CD8-positive, alpha-beta T cell (primary cell): ENCODE measurements at regions of chr21 and their contacts with region 1.

Region 1: DNA sequence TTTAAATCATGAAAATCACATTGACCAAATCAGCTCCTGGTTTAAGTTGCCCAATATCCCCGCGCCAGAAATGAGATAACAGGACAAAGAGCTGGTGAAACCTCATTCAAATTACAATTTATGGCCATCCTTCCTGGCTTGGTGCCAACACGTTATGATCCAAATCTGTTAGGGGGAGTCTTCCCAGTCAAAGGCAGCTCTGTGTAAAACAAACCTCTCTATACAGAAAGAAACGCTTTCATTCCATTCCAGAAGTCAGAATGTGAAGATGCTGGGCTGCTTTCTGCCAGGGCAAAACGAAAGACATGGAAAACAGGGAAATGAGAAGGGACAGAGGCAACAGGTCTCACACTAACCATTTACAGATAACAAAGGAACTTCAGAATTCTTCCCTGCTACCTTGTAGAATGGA is 53.5 kb upstream of the TIAM1 start:
- DNase-seq: no peak
- ATAC-seq: no peak
- H3K4me3 ChIP-seq: peak overlapping the region in 1 of 2 experiments; percentile 14
- H3K4me3 Mint-ChIP-seq: no peak overlapping the region
- H3K27ac ChIP-seq: no peak overlapping the region
- H3K27ac Mint-ChIP-seq: peak overlapping the region; percentile 84
- H3K4me1 ChIP-seq: peaks cover 47% of the 10 kb centered on the region
- H3K4me1 Mint-ChIP-seq: peaks cover 58% of the 10 kb centered on the region
- H3K27me3 ChIP-seq: peaks cover 0 to 2% of the 10 kb centered on the region in 2 experiments
- H3K27me3 Mint-ChIP-seq: no peaks in the 10 kb centered on the region
- CTCF ChIP-seq: no peak

Region 2: GRCh38 chr21:31282095-31282709 is 115.3 kb before region 1 on chr21:
- CTCF ChIA-PET with region 1: no interaction called
- POLR2A ChIA-PET with region 1: no interaction called
- intact Hi-C with region 1: no loop called
- DNase-seq: no peak
- ATAC-seq: no peak
- H3K4me3 ChIP-seq: no peak overlapping the region
- H3K4me3 Mint-ChIP-seq: no peak overlapping the region
- H3K27ac ChIP-seq: no peak overlapping the region
- H3K27ac Mint-ChIP-seq: peak overlapping the region; percentile 70
- H3K4me1 ChIP-seq: peaks cover 17% of the 10 kb centered on the region
- H3K4me1 Mint-ChIP-seq: peaks cover 31% of the 10 kb centered on the region
- H3K27me3 ChIP-seq: no peaks in the 10 kb centered on the region
- H3K27me3 Mint-ChIP-seq: no peaks in the 10 kb centered on the region
- CTCF ChIP-seq: no peak

Region 3: GRCh38 chr21:31354604-31355443 is 42.7 kb before region 1 on chr21:
- CTCF ChIA-PET with region 1: no interaction called
- POLR2A ChIA-PET with region 1: interaction called, 4 read pairs
- intact Hi-C with region 1: loop called in 1 of 2 experiments (anchors 5 kb)
- DNase-seq: peak; percentile 23 to 90 (median 69)
- ATAC-seq: peak; percentile 87
- H3K4me3 ChIP-seq: no peak overlapping the region
- H3K4me3 Mint-ChIP-seq: peak overlapping the region; percentile 27
- H3K27ac ChIP-seq: peak overlapping the region in 1 of 2 experiments; percentile 25
- H3K27ac Mint-ChIP-seq: peak overlapping the region; percentile 76
- H3K4me1 ChIP-seq: peaks cover 21% of the 10 kb centered on the region
- H3K4me1 Mint-ChIP-seq: peaks cover 30% of the 10 kb centered on the region
- H3K27me3 ChIP-seq: no peaks in the 10 kb centered on the region
- H3K27me3 Mint-ChIP-seq: no peaks in the 10 kb centered on the region
- CTCF ChIP-seq: no peak

Region 4: DNA sequence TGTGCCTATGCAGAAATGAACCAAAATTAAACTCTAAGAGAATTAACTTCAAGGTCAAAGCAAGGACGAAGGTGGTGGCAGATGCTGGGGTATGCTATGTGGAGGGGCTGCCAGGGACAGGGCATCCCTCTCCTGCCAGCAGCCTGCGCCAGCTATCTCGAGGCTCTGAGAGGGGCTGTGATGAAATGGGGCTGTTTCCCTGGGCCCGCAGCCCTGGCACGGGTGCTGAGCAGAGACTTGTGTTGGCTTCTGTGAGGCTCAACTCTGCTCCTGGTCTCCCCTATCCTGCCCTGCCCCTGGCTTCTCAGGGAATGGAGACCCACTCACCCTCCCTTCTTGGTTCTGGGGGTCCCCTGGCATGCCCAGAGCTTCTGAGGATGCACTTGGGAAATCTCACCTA is 11.5 kb before region 1 on chr21:
- CTCF ChIA-PET with region 1: no interaction called
- POLR2A ChIA-PET with region 1: no interaction called
- intact Hi-C with region 1: no loop called
- DNase-seq: no peak
- ATAC-seq: no peak
- H3K4me3 ChIP-seq: no peak overlapping the region
- H3K4me3 Mint-ChIP-seq: no peak overlapping the region
- H3K27ac ChIP-seq: no peak overlapping the region
- H3K27ac Mint-ChIP-seq: no peak overlapping the region
- H3K4me1 ChIP-seq: no peaks in the 10 kb centered on the region
- H3K4me1 Mint-ChIP-seq: peaks cover 15% of the 10 kb centered on the region
- H3K27me3 ChIP-seq: no peaks in the 10 kb centered on the region
- H3K27me3 Mint-ChIP-seq: no peaks in the 10 kb centered on the region
- CTCF ChIP-seq: no peak

Region 5: DNA sequence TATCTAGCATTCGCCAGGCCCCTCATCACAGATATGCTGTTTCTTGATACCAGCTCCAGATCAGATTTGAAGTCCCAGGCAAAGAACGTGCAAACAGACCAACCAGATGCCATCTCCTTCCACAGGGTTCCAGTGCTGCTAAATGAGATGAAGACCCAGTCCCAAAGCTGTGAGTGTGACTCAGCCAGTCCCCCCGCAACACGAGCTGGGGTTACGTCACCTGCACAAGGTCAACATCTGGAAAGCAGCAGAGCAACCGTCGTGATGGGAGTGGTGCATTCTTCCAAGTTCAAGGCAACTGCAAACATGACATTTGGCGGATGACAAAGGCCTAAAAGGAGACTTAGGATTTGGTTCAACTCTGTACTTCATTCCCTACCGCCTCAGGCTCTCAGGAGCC is 16.2 kb after region 1 on chr21:
- CTCF ChIA-PET with region 1: interaction called, 3 read pairs
- POLR2A ChIA-PET with region 1: interaction called, 7 read pairs
- intact Hi-C with region 1: loop called in 1 of 2 experiments (anchors 2 kb)
- DNase-seq: no peak
- ATAC-seq: no peak
- H3K4me3 ChIP-seq: no peak overlapping the region
- H3K4me3 Mint-ChIP-seq: no peak overlapping the region
- H3K27ac ChIP-seq: no peak overlapping the region
- H3K27ac Mint-ChIP-seq: no peak overlapping the region
- H3K4me1 ChIP-seq: peaks cover 19% of the 10 kb centered on the region
- H3K4me1 Mint-ChIP-seq: peaks cover 3% of the 10 kb centered on the region
- H3K27me3 ChIP-seq: no peaks in the 10 kb centered on the region
- H3K27me3 Mint-ChIP-seq: no peaks in the 10 kb centered on the region
- CTCF ChIP-seq: no peak